ENCODE measurements at regions of chr9 and their contacts with region 1.

Region 1: GRCh38 chr9:128600099-128600498 is 47.7 kb downstream of the SPTAN1 start:
- DNase-seq: no peak
- H3K4me3 ChIP-seq: no peak overlapping the region
- CTCF ChIP-seq: no peak

Region 2: DNA sequence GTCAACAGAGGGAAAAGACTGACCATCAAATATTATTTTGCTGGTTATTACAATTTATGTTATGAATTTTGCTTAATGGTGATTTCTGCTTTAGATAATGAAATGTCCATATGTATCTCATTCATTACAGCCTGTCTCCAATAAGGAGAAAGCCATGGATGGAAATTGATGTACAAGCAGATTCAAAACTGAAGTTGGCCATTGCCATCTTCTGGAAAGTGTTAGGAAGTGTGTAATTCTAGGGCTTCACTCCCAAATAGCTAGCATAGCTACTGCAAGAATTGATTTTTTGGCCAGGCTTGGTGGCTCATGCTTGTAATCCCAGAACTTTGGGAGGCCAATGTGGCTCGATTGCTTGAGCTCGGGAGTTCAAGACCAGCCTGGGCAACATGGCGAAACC is 10.8 kb after region 1 on chr9:
- CTCF ChIA-PET with region 1: interaction called, 18 read pairs
- POLR2A ChIA-PET with region 1: interaction called, 3 read pairs
- DNase-seq: no peak
- H3K4me3 ChIP-seq: no peak overlapping the region
- CTCF ChIP-seq: no peak

Measured in AG04449 (cell line).